AG04450 (cell line): ENCODE measurements at regions of chr5 and their contacts with region 1.

Region 1: DNA sequence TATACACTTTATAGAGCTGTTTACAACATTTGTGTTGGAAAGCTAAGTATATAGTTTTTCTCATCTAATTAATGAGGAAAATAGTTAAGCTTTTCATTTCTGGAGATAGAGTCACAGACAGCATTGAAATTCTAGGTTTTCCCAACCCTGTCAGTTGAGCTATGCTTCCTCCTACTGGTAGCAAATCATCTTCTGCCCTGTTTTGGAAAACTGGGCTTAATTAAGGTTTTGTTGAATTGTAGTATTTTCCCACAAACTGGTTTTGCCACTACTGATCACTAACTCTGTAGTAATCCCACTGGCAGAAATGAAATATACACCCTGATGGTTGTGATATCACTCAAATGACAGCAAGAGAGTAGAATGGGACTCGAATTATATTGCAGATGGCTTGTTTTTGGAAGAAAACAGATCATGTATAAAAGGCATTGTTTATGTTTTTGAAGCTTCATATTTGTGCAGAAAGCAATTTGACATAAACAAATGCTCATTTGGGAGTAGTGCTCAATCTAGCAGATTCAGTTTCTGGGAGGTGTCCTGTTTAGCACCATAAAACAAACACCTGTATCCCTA is 46.6 kb downstream of the CD180 start:
- DNase-seq: no peak
- H3K4me3 ChIP-seq: no peak overlapping the region
- H3K27ac ChIP-seq: no peak overlapping the region
- H3K27me3 ChIP-seq: no peaks in the 10 kb centered on the region
- CTCF ChIP-seq: peak; percentile 85

Region 2: GRCh38 chr5:66807743-66808142 is 342.3 kb before region 1 on chr5:
- CTCF ChIA-PET with region 1: interaction called, 210 read pairs
- POLR2A ChIA-PET with region 1: no interaction called
- DNase-seq: peak; percentile 16
- H3K4me3 ChIP-seq: no peak overlapping the region
- H3K27ac ChIP-seq: no peak overlapping the region
- H3K27me3 ChIP-seq: peaks cover 12% of the 10 kb centered on the region
- CTCF ChIP-seq: peak; percentile 62

Region 3: GRCh38 chr5:66821688-66822429 is 328.2 kb before region 1 on chr5:
- CTCF ChIA-PET with region 1: interaction called, 210 read pairs
- POLR2A ChIA-PET with region 1: interaction called, 3 read pairs
- DNase-seq: no peak
- H3K4me3 ChIP-seq: no peak overlapping the region
- H3K27ac ChIP-seq: no peak overlapping the region
- H3K27me3 ChIP-seq: peaks cover 7% of the 10 kb centered on the region
- CTCF ChIP-seq: no peak

Region 4: DNA sequence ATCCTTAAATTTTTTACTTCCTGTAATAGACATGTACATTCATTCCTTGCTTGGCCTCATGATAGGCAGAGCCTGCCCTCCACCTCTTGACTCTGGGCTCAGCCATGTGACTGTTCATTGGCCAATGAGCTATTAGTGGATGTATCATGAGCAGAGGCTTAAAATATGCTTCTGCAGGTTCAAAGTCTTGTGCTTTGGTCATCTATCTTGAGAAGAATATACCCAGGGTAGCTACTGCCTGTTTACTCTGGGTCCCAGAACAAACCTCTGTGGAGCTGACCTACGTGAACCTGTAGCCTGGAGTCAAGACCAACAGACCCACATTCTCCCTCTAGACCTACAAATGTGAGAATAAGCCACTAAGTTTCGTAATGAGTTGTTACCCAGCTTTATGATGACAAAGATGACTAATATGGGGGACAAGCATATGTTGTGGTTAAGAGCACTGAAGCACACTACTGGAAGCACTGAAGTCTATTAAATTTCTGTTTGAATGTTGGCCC is 309.5 kb before region 1 on chr5:
- CTCF ChIA-PET with region 1: interaction called, 11 read pairs
- POLR2A ChIA-PET with region 1: no interaction called
- DNase-seq: no peak
- H3K4me3 ChIP-seq: no peak overlapping the region
- H3K27ac ChIP-seq: no peak overlapping the region
- H3K27me3 ChIP-seq: no peaks in the 10 kb centered on the region
- CTCF ChIP-seq: no peak

Region 5: DNA sequence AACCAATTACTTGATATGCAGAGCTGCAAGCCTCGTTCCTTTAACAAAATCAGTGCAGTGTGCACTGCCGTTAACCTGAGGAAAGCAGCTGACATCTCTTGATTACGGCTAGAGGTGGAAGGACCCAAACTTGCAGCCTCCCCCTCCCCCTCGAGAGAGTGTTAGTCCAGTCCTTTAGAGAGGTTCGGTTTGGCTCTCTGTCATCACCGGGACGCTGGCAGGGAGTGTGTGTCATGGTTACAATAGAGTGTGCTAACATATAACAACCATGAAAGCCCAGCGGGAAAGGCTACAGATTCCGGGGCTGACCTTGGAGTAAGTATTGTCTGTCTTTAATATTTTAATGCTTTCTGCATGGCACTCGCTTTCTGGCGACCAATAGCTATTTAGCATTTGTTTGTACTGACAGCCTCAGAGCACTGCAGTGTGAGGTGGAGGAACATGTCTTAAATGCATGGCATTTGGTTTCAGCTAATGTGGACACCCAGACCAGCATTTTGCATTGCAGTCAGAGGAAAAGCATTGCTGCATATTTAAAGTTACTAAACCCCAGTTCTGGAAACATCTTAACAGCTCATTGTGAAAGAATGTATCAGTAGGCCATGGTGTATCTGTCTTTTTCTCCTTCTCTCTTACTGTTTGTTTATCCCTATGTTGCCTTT is 190.9 kb before region 1 on chr5:
- CTCF ChIA-PET with region 1: interaction called, 18 read pairs
- POLR2A ChIA-PET with region 1: no interaction called
- DNase-seq: peak; percentile 43
- H3K4me3 ChIP-seq: peak overlapping the region; percentile 70
- H3K27ac ChIP-seq: peak overlapping the region; percentile 85
- H3K27me3 ChIP-seq: no peaks in the 10 kb centered on the region
- CTCF ChIP-seq: no peak

Region 6: GRCh38 chr5:67003935-67004729 is 145.9 kb before region 1 on chr5:
- CTCF ChIA-PET with region 1: interaction called, 15 read pairs
- POLR2A ChIA-PET with region 1: interaction called, 4 read pairs
- DNase-seq: peak; percentile 59
- H3K4me3 ChIP-seq: peak overlapping the region; percentile 63
- H3K27ac ChIP-seq: peak overlapping the region; percentile 54
- H3K27me3 ChIP-seq: no peaks in the 10 kb centered on the region
- CTCF ChIP-seq: no peak